HepG2 (cell line): ENCODE measurements at regions of chr2 and their contacts with region 1.

Region 1: GRCh38 chr2:38581193-38582147 is 21.3 kb downstream of the HNRNPLL start:
- DNase-seq: peak; percentile 80
- ATAC-seq: peak; percentile 89
- H3K4me3 ChIP-seq: no peak overlapping the region
- H3K27ac ChIP-seq: no peak overlapping the region
- H3K4me1 ChIP-seq: peaks cover 22% of the 10 kb centered on the region
- H3K27me3 ChIP-seq: no peaks in the 10 kb centered on the region
- CTCF ChIP-seq: peak; percentile 81
- EP300 ChIP-seq: no peak
- POLR2A ChIP-seq: no peak
- RAD21 ChIP-seq: peak; percentile 85

Region 2: GRCh38 chr2:38535744-38536506 is 45.5 kb before region 1 on chr2:
- CTCF ChIA-PET with region 1: interaction called, 3 read pairs
- POLR2A ChIA-PET with region 1: no interaction called
- in situ Hi-C with region 1: no loop called
- intact Hi-C with region 1: loop called (anchors 2 kb)
- DNase-seq: peak; percentile 67
- ATAC-seq: peak; percentile 86
- H3K4me3 ChIP-seq: peak overlapping the region; percentile 65 to 78 (median 67)
- H3K27ac ChIP-seq: no peak overlapping the region
- H3K4me1 ChIP-seq: peaks cover 55% of the 10 kb centered on the region
- H3K27me3 ChIP-seq: 0 out of 5 replicates have a peak, but pooled peaks cover 0 to 1% of the 10 kb centered on the region in 2 experiments
- CTCF ChIP-seq: peak; percentile 100
- EP300 ChIP-seq: no peak
- POLR2A ChIP-seq: no peak
- RAD21 ChIP-seq: peak; percentile 98

Region 3: DNA sequence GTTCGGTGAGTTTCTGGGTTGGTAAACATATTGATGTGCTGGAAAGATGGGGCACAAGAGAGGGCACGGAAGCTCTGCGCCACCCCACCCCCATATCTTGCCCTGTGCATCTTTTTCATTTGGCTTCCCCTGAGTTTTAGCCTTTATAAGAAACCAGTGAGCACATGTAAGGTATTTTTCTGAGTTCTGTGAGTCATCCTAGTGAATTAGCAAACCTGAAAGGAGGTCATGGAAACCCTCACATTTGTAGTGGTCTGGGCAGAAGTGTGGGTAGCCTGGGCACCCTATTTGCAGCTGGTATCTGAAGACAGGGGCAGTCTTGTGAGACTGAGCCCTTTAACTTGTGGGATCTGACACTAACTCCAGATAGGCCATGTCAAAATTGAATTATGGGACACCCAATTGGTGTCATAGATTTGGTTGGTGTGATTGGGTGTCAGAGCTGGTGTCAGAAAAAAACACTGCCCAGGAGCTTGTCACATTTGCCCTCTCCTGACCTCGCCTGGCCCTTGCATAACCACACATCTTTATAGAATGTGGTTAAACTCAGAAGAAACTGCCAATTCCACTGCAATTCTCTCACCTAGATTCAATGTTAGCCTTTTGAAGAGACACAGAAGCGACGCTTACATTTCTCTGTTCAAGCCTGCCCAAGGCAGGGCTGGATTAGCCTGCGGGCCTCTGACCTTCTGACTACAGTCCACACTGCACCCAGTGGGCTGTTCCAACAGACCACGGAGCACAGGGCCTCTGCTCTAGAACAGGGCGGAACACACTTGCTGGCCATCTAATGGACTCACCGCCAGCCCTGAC is 72.5 kb after region 1 on chr2:
- CTCF ChIA-PET with region 1: no interaction called
- POLR2A ChIA-PET with region 1: no interaction called
- in situ Hi-C with region 1: no loop called
- intact Hi-C with region 1: no loop called
- DNase-seq: peak; percentile 53
- ATAC-seq: peak; percentile 98
- H3K4me3 ChIP-seq: peak overlapping the region; percentile 29 to 67 (median 53)
- H3K27ac ChIP-seq: peak overlapping the region; percentile 42
- H3K4me1 ChIP-seq: peaks cover 48% of the 10 kb centered on the region
- H3K27me3 ChIP-seq: no peaks in the 10 kb centered on the region; a peak in 2 of 5 replicates
- CTCF ChIP-seq: no peak; the same call in 1 of the 2 replicates
- EP300 ChIP-seq: peak in 1 of 2 experiments; percentile 56; a peak in 1 of 4 replicates
- POLR2A ChIP-seq: peak; percentile 60 to 72
- RAD21 ChIP-seq: no peak; the same call in 1 of the 2 replicates

Region 4: DNA sequence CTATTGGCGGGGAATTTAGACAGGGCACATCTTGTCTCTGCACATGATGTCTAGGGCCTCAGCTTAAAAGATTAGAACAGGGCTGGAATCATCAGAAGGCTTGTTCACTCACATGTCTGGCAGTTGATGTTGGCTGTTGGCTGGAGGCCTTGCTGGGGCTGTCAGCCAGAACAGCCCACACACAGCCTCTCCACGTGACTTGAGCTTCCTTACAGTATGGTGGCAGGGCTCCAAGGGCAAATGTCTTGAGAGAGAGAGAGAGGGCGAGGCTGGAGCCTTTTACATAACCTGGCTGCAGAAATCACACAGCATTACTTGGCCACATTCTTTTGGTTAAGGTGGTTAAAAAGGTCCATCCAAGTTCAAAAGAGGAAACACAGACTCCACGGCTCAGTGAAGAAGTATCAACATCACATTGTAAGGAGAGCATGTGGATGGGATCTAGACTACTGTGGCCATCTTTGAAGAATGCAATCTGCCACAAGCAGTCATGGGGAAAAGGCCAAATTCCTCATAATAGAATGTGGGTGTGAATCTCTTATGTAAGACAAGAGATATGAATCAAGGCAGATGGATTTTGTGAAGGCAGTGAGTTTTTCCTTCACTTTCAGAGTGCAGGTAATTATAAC is 139.3 kb after region 1 on chr2:
- CTCF ChIA-PET with region 1: interaction called, 19 read pairs
- POLR2A ChIA-PET with region 1: no interaction called
- in situ Hi-C with region 1: no loop called
- intact Hi-C with region 1: no loop called
- DNase-seq: no peak
- ATAC-seq: no peak
- H3K4me3 ChIP-seq: no peak overlapping the region
- H3K27ac ChIP-seq: no peak overlapping the region
- H3K4me1 ChIP-seq: peaks cover 10% of the 10 kb centered on the region
- H3K27me3 ChIP-seq: no peaks in the 10 kb centered on the region
- CTCF ChIP-seq: no peak
- EP300 ChIP-seq: no peak
- POLR2A ChIP-seq: no peak
- RAD21 ChIP-seq: no peak

Region 5: GRCh38 chr2:38740851-38741731 is 159.6 kb after region 1 on chr2:
- CTCF ChIA-PET with region 1: interaction called, 15 read pairs
- POLR2A ChIA-PET with region 1: no interaction called
- in situ Hi-C with region 1: no loop called
- intact Hi-C with region 1: loop called (anchors 1 kb)
- DNase-seq: peak; percentile 60
- ATAC-seq: peak; percentile 39
- H3K4me3 ChIP-seq: peak overlapping the region in 1 of 3 experiments; percentile 10; a peak in 2 of 6 replicates
- H3K27ac ChIP-seq: peak overlapping the region; percentile 71
- H3K4me1 ChIP-seq: peaks cover 57% of the 10 kb centered on the region
- H3K27me3 ChIP-seq: no peaks in the 10 kb centered on the region
- CTCF ChIP-seq: peak; percentile 61
- EP300 ChIP-seq: no peak
- POLR2A ChIP-seq: no peak
- RAD21 ChIP-seq: 0 out of 2 replicates have a peak, but pooled peaks have one; percentile 36